AG04450 (cell line): ENCODE measurements at regions of chr17 and their contacts with region 1.

Region 1: DNA sequence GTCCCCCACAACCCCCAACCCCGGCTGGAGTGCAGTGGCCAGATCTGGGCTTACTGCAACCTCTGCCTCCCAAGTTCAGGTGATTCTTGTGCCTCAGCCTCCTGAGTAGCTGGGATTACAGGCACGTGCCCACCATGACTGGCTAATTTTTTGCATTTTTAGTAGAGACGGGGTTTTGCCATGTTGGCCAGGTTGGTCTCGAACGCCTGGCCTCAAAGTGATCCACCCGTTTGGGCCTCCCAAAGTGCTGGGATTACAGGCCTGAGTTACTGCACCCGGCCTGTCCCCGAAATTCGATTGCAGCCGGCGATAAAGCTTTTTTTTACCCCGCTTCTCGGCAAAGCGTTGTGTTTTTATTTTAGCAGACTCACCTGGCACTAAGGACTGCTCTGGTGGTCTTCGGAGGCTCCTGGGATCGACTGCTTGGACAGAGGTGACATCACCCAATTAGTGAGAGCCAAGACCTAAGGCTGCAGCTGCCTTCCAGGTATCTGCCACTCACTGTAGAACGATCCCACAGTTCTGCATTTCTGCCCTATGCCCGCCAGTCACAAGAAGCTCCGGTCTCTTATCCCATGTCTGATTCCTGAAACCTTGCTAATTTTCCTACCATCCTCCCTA is 82.2 kb upstream of the ARL4D start:
- DNase-seq: no peak
- H3K4me3 ChIP-seq: no peak overlapping the region
- H3K27ac ChIP-seq: no peak overlapping the region
- H3K27me3 ChIP-seq: no peaks in the 10 kb centered on the region
- CTCF ChIP-seq: no peak

Region 2: GRCh38 chr17:42997984-42998938 is 318.4 kb before region 1 on chr17 and contains the start of gene RPL27:
- CTCF ChIA-PET with region 1: no interaction called
- POLR2A ChIA-PET with region 1: interaction called, 18 read pairs
- DNase-seq: peak; percentile 100
- H3K4me3 ChIP-seq: peak within 1 kb of the TSS; percentile 71
- H3K27ac ChIP-seq: peak within 1 kb of the TSS; percentile 93
- H3K27me3 ChIP-seq: no peaks in the 10 kb centered on the region
- CTCF ChIP-seq: peak; percentile 80
- polyA plus RNA-seq, gene RPL27: 4,202 and 4,485 TPM in 2 replicates

Region 3: DNA sequence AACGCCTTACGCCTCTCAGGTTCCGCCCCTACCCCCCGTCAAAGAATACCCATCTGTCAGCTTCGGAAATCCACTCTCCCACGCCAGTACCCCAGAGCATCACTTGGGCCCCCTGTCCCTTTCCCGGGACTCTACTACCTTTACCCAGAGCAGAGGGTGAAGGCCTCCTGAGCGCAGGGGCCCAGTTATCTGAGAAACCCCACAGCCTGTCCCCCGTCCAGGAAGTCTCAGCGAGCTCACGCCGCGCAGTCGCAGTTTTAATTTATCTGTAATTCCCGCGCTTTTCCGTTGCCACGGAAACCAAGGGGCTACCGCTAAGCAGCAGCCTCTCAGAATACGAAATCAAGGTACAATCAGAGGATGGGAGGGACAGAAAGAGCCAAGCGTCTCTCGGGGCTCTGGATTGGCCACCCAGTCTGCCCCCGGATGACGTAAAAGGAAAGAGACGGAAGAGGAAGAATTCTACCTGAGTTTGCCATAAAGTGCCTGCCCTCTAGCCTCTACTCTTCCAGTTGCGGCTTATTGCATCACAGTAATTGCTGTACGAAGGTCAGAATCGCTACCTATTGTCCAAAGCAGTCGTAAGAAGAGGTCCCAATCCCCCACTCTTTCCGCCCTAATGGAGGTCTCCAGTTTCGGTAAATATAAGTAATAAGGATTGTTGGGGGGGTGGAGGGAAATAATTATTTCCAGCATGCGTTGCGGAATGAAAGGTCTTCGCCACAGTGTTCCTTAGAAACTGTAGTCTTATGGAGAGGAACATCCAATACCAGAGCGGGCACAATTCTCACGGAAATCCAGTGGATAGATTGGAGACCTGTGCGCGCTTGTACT is 191.3 kb before region 1 on chr17 and contains the start of gene BRCA1:
- CTCF ChIA-PET with region 1: no interaction called
- POLR2A ChIA-PET with region 1: interaction called, 11 read pairs
- DNase-seq: peak; percentile 95
- H3K4me3 ChIP-seq: peak within 1 kb of the TSS; percentile 89
- H3K27ac ChIP-seq: peak within 1 kb of the TSS; percentile 69
- H3K27me3 ChIP-seq: no peaks in the 10 kb centered on the region
- CTCF ChIP-seq: no peak
- polyA plus RNA-seq, gene BRCA1: 5.1 and 8.1 TPM in 2 replicates

Region 4: GRCh38 chr17:43211480-43212402 is 104.9 kb before region 1 on chr17 and contains the start of gene TMEM106A:
- CTCF ChIA-PET with region 1: no interaction called
- POLR2A ChIA-PET with region 1: interaction called, 31 read pairs
- DNase-seq: peak; percentile 67
- H3K4me3 ChIP-seq: peak within 1 kb of the TSS; percentile 75
- H3K27ac ChIP-seq: peak within 1 kb of the TSS; percentile 80
- H3K27me3 ChIP-seq: no peaks in the 10 kb centered on the region
- CTCF ChIP-seq: peak; percentile 44
- polyA plus RNA-seq, gene TMEM106A: 4.5 and 5.1 TPM in 2 replicates

Region 5: DNA sequence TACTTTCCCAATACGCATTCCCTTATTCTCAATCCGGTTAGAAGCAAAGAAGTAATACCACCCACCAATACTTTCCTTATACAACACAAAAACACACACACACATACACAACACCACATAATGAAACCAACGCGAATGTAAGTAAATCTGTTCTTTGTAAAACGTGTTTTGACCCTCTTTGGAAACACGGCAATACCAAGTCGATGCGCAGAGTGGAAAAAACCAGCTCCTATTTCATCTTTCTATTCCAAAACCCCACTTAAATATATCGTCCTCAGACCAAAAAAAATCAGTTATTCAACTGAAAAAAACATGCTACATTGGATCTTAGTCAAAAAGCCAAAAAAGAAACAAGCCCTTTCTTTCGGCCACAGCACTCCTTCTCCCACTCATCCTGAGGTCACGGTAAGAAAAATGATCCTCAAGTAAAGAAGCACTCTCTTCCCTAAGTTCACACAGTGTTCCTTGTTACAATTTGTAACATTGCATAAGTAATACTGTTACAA is 51.2 kb after region 1 on chr17:
- CTCF ChIA-PET with region 1: no interaction called
- POLR2A ChIA-PET with region 1: interaction called, 21 read pairs
- DNase-seq: peak; percentile 97
- H3K4me3 ChIP-seq: peak overlapping the region; percentile 35
- H3K27ac ChIP-seq: peak overlapping the region; percentile 97
- H3K27me3 ChIP-seq: no peaks in the 10 kb centered on the region
- CTCF ChIP-seq: no peak